Pancreas (tissue), 10 donors: ENCODE measurements at regions of chr4 and their contacts with region 1.

Region 1: GRCh38 chr4:82833696-82834313 is 35.2 kb upstream of the SCD5 start:
- DNase-seq: no peak
- ATAC-seq: peak; percentile 78 to 90 (median 88)
- H3K4me3 ChIP-seq: no peak overlapping the region
- H3K27ac ChIP-seq: peak overlapping the region in 1 of 4 donors; percentile 29
- H3K4me1 ChIP-seq: no peaks in the 10 kb centered on the region
- H3K27me3 ChIP-seq: no peaks in the 10 kb centered on the region
- CTCF ChIP-seq: no peak

Region 2: DNA sequence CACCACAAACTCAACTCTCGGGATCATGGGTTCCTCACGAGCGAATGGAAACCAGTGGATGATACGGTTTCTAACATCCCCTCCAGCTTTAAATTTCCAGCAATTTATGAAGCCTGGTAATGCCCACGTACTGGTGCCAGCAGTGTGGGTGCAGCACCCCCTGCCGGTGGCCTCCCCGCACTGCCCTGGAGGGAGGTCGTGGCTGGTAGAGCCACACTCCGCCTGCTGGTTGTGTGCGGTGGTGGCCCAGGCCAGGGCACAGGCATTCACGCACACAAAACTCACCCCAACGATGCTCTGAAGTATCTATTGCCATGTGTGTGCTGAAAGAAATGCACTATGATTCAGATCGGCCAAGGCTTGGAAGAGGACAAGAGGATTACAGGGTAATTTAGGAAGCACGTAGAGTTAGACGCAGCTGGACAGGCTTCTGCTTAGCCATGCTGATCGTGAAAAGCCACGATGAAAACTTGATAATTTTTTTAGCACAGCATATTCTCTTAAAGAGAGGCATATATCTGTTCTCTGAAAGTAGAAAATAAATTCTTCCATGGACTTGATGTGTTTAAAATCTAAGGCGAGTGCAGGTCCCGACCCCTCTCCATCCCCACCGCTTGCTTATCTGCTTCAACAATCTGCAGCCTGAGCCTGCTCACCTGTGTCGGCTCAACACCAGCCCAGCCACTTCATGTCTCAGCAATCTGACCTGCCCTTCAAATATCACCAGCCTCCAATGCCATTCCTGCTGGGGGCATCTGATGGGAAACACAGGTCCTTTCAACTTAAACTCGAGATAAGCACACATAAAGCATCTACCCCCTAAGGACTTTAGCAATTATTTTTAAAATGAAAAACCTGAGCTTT is 94.3 kb before region 1 on chr4:
- intact Hi-C with region 1: no loop called
- DNase-seq: peak; percentile 65 to 93 (median 83)
- ATAC-seq: peak; percentile 88 to 99 (median 93)
- H3K4me3 ChIP-seq: no peak overlapping the region
- H3K27ac ChIP-seq: no peak overlapping the region
- H3K4me1 ChIP-seq: peaks cover 2 to 12% (median 8%) of the 10 kb centered on the region in 3 donors
- H3K27me3 ChIP-seq: no peaks in the 10 kb centered on the region
- CTCF ChIP-seq: peak; percentile 88 to 98 (median 94)

Region 3: GRCh38 chr4:82865592-82865991 is 31.8 kb after region 1 on chr4:
- intact Hi-C with region 1: no loop called
- DNase-seq: no peak
- ATAC-seq: peak; percentile 44 to 82 (median 68)
- H3K4me3 ChIP-seq: no peak overlapping the region
- H3K27ac ChIP-seq: peak overlapping the region in 2 of 4 donors; percentile 68 to 76
- H3K4me1 ChIP-seq: peaks cover 18 to 25% (median 18%) of the 10 kb centered on the region in 3 donors
- H3K27me3 ChIP-seq: no peaks in the 10 kb centered on the region
- CTCF ChIP-seq: no peak

Region 4: GRCh38 chr4:82886147-82886942 is 52.5 kb after region 1 on chr4:
- intact Hi-C with region 1: loop called in 1 of 3 experiments (anchors 10 kb)
- DNase-seq: no peak
- ATAC-seq: no peak
- H3K4me3 ChIP-seq: peak overlapping the region in 2 of 4 donors; percentile 1 to 2
- H3K27ac ChIP-seq: peak overlapping the region in 2 of 4 donors; percentile 58 to 100
- H3K4me1 ChIP-seq: peaks cover 9 to 53% (median 43%) of the 10 kb centered on the region in 3 donors
- H3K27me3 ChIP-seq: no peaks in the 10 kb centered on the region
- CTCF ChIP-seq: no peak